ENCODE measurements at regions of chr1 and their contacts with region 1.

Region 1: DNA sequence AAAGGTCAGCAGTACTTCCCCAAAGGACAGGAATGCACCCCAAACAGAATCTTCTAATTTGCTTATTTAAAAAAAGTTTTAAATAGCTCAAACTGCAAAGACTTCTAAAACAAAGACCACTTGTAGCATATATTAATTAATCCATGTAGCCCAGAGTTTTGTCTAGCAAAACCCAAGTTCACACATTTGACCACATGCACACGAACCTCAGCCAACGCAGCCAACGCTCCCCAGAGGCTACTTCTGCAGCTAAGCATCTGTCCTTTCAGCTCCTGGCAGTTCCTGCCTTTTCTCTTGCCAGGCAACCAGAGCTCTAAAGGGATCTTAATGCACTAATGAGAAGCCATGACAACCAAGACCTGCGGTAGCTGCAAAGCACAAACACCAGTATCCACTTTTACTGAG is 89.6 kb downstream of the RERE start:
- DNase-seq: peak; percentile 31
- CTCF ChIP-seq: no peak

Region 2: DNA sequence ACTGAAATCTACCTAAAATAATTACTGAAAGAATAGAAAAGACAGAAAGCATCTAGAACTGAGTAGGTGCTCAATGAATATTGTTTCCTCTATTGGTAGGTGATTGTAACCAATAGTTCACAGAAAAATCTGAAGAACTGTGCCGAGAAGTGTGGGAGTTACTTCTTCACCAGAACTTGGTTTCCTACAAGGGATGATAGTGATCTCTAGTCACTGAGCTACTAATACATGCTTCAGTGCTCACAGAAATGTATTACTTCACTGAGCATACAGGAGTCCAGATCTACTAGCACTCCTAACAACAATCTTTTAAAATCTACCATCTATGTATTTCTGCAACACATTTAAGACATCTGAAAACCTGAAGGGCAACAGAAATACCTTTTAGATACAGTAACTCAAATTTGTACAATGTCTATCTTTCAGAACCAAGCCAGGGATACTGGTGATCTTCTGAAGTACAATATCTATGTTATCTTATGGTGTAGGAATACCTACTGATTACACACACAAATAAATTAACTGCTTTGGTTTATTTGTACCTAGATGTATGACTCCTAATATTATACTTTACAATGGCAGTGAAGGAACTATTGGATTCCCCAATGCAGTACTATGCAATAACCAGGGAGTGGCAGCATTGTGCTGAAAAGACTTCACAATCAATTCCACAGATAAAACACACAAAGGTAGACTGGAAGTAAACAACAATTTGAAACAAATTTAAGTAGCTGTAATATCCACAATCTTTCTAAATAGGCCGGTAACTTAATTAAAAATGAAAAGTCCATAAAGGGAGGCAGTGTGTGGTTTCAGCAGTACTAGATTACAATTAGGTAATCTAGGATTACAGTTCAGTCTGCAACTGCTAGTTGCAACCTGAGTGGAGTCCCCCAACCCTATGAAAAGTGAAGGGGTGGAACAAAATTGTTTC is 166.9 kb before region 1 on chr1:
- CTCF ChIA-PET with region 1: interaction called, 67 read pairs
- POLR2A ChIA-PET with region 1: no interaction called
- DNase-seq: peak; percentile 37
- CTCF ChIP-seq: peak; percentile 86

Region 3: DNA sequence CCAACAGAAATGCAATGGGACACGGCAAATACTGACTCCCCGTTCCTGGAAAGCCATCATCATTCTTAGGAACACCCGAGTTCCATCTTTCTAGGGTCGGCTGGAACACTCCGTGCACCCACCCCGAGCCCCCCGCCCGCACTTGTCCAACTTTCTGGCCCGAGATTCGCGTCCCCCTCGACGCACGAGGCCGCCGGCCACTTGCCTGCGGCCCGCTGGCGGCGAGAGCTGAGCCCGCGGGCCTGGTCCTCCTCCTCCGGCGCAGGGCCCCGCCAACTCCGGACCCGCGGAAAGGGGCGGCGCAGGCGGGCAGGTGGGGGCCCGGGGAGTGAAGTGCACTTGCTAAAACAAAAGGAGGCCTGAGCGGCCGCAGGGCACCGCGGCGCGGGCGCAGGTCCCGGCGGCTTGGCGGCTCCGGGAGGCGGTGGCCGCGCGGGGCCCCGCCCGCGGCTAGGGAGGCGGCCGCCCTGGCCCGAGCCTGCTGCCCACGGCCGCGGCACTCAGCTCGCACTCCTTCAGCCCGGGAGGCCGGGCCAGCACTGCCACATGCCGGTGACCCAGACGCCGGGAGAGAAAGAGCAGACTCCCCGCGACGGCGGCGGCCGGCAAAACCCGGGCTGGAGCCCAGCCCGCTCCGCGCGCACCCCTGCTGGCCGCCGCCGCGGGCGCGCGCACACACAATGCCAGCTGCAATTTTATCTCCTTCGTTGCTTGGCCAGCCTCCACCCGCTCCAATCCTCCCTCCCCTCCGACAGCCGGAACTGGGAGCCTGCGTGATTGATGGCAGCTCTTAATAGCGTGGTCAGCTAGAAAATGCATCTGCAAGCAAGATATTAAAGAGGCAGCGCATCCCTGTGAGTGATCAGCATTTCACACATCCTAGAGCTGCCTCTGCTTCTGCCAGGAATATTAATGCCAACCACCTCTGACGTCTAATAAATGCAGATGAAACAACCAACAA is 24.7 kb before region 1 on chr1:
- CTCF ChIA-PET with region 1: interaction called, 15 read pairs
- POLR2A ChIA-PET with region 1: no interaction called
- DNase-seq: peak; percentile 88
- CTCF ChIP-seq: peak; percentile 39

Region 4: DNA sequence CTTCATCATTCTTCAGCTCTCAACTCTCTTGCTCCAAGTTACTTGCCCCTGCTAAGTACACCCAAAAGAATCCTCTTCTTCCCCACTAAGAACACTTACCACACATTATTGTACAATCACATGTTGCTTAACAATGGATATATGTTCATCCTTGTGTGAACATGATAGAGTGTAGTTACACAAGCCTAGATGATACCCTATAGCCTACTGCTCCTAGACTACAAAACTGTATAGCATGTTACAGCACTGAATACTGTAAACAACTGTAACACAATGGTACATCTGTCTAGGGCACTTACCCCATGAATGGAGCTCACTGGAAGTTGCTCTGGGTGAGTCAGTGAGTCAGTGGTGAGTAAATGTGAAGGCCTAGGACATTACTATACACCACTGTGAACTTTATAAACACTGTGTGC is 12.2 kb after region 1 on chr1:
- CTCF ChIA-PET with region 1: interaction called, 47 read pairs
- POLR2A ChIA-PET with region 1: no interaction called
- DNase-seq: no peak
- CTCF ChIP-seq: no peak

Region 5: DNA sequence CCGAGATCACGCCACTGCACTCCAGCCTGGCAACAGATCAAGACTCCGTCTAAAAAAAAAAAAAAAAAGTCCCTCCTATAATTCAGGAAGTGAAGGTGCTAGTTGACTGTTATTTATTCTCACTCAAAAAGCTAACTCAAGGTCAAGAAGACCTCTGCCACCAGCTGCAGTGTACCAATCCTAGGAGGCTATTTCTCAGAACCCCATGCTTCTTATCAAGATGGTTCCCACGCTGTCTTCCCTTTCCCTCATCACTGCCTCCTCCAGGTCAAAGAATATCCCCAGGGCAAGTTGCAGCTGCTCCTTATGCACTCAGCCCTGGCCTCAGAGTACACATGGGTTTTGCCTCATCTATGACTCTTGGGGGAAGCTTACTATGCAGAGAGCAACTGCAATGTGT is 36.1 kb after region 1 on chr1:
- CTCF ChIA-PET with region 1: interaction called, 11 read pairs
- POLR2A ChIA-PET with region 1: no interaction called
- DNase-seq: peak; percentile 42
- CTCF ChIP-seq: peak; percentile 18

Region 6: DNA sequence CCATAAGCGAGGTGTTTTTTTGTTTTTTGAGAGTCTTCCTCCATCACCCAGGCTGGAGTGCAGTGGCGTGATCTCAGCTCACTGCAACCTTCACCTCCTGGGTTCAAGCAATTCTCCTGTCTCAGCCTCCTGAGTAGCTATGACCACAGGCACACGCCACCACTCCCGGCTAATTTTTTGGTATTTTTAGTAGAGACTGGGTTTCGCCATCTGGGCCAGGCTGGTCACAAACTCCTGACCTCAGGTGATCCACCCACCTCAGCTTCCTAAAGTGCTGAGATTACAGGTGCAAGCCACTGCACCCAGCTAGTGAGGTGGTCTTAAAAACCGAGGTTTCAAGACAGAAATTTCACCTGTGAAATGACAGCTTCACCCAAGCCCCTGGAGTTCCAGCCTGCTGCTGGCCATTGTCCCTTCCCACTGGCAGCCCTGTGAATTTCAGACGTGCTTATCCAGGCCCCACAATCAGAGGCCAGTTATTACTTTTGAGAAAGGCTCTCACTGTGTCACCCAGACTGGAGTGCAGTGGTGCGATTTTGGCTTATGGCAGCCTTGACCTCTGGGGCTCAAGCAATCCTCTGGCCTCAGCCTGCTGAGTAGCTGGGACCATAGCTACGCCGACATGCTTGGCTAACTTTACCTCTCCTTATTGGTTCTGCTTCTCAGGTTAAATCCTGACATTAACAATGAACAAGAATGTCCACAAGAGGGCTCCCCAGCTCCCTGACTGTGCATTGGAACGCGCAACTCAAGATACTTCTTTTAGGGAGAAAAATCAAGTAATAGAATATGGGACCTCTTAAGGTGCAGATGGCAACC is 131.3 kb after region 1 on chr1:
- CTCF ChIA-PET with region 1: interaction called, 10 read pairs
- POLR2A ChIA-PET with region 1: no interaction called
- DNase-seq: peak; percentile 46
- CTCF ChIP-seq: peak; percentile 65

Region 7: DNA sequence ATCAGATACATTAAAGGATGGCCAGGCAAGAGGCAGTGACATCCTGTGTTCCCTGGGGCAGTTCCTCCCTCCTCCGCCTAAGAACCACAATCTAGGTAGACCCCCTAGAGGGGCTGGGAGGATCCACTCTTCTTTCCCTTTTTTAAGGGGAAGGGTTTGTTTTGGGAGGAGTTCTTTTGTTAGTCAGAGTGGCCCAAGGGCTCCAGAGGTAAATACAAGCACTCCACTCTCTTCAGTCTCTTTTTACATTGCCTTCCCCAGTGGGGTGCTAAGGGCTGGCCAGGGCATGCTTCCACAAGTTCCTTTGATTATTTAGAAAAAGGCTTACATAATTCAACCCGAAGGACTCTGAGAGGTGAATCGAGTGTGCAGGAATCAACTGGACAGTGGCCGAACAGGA is 183.6 kb after region 1 on chr1:
- CTCF ChIA-PET with region 1: no interaction called
- POLR2A ChIA-PET with region 1: no interaction called
- DNase-seq: no peak
- CTCF ChIP-seq: no peak

Region 8: GRCh38 chr1:9004700-9005394 is 277.0 kb after region 1 on chr1:
- CTCF ChIA-PET with region 1: no interaction called
- POLR2A ChIA-PET with region 1: no interaction called
- DNase-seq: peak; percentile 91
- CTCF ChIP-seq: peak; percentile 93

Measured in GM10248 (cell line).